HEK293 (cell line): ENCODE measurements at regions of chr2 and their contacts with region 1.

Region 1: DNA sequence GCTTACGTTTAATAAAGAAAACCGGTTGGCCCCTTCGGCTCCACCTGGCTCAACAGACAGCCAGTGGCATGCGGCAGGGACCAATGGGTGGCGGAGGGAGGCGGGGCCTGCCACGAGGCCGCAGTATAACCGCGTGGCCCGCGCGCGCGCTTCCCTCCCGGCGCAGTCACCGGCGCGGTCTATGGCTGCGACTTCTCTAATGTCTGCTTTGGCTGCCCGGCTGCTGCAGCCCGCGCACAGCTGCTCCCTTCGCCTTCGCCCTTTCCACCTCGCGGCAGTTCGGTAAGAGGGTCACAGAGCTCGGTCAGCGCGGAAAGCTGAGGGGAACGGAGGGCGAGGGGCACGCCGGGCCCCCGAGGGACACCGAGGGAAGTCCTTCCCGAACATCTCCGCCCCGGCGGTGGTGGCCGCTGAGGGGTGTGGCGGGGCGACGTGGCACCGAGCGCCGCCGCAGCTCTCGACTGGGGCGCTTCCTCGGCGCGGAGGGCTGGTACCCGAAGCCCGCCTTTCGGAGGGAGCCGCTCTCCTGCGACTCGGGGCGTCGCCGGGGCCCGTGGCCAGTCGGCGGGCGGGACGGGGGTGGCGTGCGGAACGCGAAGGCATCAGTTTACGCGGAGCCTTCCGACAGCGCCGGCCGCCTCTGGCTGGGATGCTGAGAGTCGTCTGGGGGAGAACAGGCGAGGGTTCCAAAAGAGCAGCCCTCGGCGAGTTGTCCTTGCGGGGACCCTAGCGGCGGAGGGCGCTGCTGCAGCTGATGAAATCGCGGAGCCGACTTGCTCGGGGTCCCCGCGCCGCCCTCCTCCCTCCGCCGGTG is at the start of gene MTHFD2:
- H3K4me3 ChIP-seq: peak within 1 kb of the TSS; percentile 76
- H3K27ac ChIP-seq: peak within 1 kb of the TSS; percentile 97
- H3K4me1 ChIP-seq: peaks cover 8% of the 10 kb centered on the region; the same call in 1 of the 2 replicates
- CTCF ChIP-seq: peak; percentile 90

Region 2: DNA sequence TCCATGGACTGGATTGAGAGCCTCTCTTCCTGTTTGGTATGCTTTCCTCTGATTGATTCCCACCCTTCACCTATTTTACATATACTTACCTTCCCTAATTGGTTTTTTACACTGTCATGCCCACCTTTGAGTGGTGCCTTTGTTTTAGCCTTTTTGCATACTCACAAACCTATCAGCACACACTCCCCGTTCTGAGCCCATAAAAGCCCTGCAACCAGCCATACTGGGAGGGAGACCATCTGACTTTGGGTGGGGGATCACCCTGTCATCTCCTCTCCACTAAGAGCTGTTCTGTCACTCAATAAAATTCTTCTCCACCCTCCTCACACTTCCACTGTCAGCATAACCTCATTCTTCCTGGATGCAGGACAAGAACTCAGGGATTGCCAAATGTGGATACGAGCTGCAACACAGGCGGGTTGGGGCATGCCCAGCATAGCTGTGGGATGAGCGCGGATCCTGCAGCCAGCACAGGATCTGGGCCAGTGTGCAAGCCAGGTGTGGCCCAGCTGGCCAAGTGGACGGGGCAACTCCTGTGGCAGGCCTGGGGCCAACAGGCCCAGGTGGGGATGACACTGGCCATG is 10.6 kb before region 1 on chr2:
- CTCF ChIA-PET with region 1: interaction called, 4 read pairs
- POLR2A ChIA-PET with region 1: interaction called, 16 read pairs
- H3K4me3 ChIP-seq: no peak overlapping the region
- H3K27ac ChIP-seq: no peak overlapping the region
- H3K4me1 ChIP-seq: no peaks in the 10 kb centered on the region
- CTCF ChIP-seq: no peak

Region 3: GRCh38 chr2:74212702-74213410 is 14.2 kb after region 1 on chr2:
- CTCF ChIA-PET with region 1: no interaction called
- POLR2A ChIA-PET with region 1: interaction called, 18 read pairs
- H3K4me3 ChIP-seq: no peak overlapping the region
- H3K27ac ChIP-seq: no peak overlapping the region
- H3K4me1 ChIP-seq: no peaks in the 10 kb centered on the region
- CTCF ChIP-seq: no peak